ENCODE measurements at regions of chr3 and their contacts with region 1.

Region 1: GRCh38 chr3:127652231-127652995 is 20.3 kb upstream of the ABTB1 start:
- DNase-seq: peak in 1 of 2 donors; percentile 38
- ATAC-seq: peak; percentile 84 to 93 (median 89)
- H3K4me3 ChIP-seq: no peak overlapping the region
- H3K27ac ChIP-seq: no peak overlapping the region
- H3K4me1 ChIP-seq: peaks cover 0 to 12% (median 4%) of the 10 kb centered on the region in 9 donors
- H3K27me3 ChIP-seq: no peaks in the 10 kb centered on the region
- CTCF ChIP-seq: peak; percentile 79 to 97 (median 94)

Region 2: DNA sequence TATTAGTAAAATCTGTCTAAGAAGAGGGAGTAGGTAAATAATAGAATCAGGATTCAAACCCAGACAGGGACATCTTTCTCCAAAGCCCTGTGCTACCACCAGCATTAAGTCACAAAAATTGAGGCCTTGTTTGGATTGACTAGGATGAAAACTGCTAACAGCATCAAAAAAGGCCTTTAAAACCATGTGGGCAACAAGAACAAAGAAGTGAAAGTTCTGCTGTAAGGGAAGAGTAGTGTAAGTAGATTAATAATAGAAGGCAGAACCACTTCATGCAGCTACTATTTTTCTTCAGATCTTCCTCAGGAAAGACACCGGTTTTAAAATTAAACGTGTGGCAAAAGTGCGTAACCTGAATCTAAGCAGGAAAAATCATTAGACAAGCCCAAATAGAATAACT is 247.4 kb after region 1 on chr3:
- intact Hi-C with region 1: no loop called
- DNase-seq: no peak
- ATAC-seq: peak in 1 of 8 donors; percentile 46
- H3K4me3 ChIP-seq: no peak overlapping the region
- H3K27ac ChIP-seq: peak overlapping the region in 1 of 10 donors; percentile 10
- H3K4me1 ChIP-seq: peaks cover 0 to 6% (median 0%) of the 10 kb centered on the region in 9 donors
- H3K27me3 ChIP-seq: no peaks in the 10 kb centered on the region
- CTCF ChIP-seq: no peak

Region 3: GRCh38 chr3:127970966-127971592 is 318.7 kb after region 1 on chr3:
- intact Hi-C with region 1: loop called (anchors 1 to 5 kb)
- DNase-seq: peak in 1 of 2 donors; percentile 28
- ATAC-seq: peak; percentile 69 to 87 (median 79)
- H3K4me3 ChIP-seq: no peak overlapping the region
- H3K27ac ChIP-seq: no peak overlapping the region
- H3K4me1 ChIP-seq: peaks cover 0 to 9% (median 0%) of the 10 kb centered on the region in 9 donors
- H3K27me3 ChIP-seq: no peaks in the 10 kb centered on the region
- CTCF ChIP-seq: peak; percentile 59 to 82 (median 70)

Region 4: DNA sequence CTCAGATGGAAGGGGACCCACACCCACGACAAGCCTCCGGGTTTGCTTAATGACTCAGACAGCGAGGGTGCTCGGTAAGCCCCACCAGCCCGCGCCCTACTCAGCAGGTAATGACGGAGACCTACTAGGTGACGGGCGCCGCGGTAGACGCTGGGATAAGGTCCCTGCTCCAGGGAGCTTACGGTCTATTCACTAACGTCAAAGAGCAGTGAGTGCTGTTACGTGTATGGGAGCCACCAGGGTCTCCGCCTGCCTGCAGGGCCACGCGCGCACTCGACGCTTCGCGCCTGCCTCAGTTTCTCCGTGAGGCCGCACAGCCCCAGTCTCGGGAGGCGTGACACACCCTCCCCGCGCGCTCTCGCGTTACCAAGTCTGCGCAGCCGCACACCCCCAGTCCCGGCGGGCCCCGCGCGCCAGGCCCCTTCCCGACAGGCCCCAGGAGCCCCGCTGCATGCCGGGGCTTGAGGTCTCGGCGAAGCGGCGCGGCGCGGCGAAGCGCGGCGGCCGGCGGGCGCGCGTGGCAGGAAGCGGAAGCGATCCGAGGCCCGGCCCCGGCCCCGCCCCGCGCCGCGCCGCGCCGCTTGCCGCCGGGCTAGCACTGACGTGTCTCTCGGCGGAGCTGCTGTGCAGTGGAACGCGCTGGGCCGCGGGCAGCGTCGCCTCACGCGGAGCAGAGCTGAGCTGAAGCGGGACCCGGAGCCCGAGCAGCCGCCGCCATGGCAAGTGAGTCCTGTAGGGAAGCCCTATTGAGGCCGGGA is 399.6 kb after region 1 on chr3 and contains the start of gene SEC61A1:
- intact Hi-C with region 1: loop called in 2 of 10 experiments (anchors 10 kb)
- DNase-seq: peak; percentile 94 to 97
- ATAC-seq: peak; percentile 96 to 99 (median 98)
- H3K4me3 ChIP-seq: peak within 1 kb of the TSS; percentile 70 to 99 (median 96)
- H3K27ac ChIP-seq: peak within 1 kb of the TSS; percentile 51 to 99 (median 95)
- H3K4me1 ChIP-seq: peaks cover 18 to 48% (median 40%) of the 10 kb centered on the region in 9 donors
- H3K27me3 ChIP-seq: no peaks in the 10 kb centered on the region
- CTCF ChIP-seq: peak in 1 of 9 donors; percentile 4
- total RNA-seq, gene SEC61A1: 54.8 to 111 (median 62.1) TPM

Measured in heart right ventricle (tissue), 16 donors.